IMR-90 (cell line): ENCODE measurements at regions of chr10 and their contacts with region 1.

Region 1: GRCh38 chr10:21943633-21944265 is 59.8 kb downstream of the DNAJC1 start:
- DNase-seq: no peak
- ATAC-seq: no peak
- H3K4me3 ChIP-seq: no peak overlapping the region
- H3K27ac ChIP-seq: no peak overlapping the region
- H3K4me1 ChIP-seq: no peaks in the 10 kb centered on the region; the same call in 1 of the 2 replicates
- H3K27me3 ChIP-seq: no peaks in the 10 kb centered on the region
- CTCF ChIP-seq: no peak
- POLR2A ChIP-seq: no peak
- RAD21 ChIP-seq: no peak

Region 2: GRCh38 chr10:21285742-21286331 is 657.9 kb before region 1 on chr10:
- CTCF ChIA-PET with region 1: no interaction called
- POLR2A ChIA-PET with region 1: no interaction called
- dilution Hi-C with region 1: no loop called
- in situ Hi-C with region 1: loop called (anchors 10 kb)
- intact Hi-C with region 1: no loop called
- DNase-seq: peak; percentile 21
- ATAC-seq: peak; percentile 17; the same call in 1 of the 2 replicates
- H3K4me3 ChIP-seq: no peak overlapping the region
- H3K27ac ChIP-seq: no peak overlapping the region
- H3K4me1 ChIP-seq: 0 out of 2 replicates have a peak, but pooled peaks cover 2% of the 10 kb centered on the region
- H3K27me3 ChIP-seq: no peaks in the 10 kb centered on the region
- CTCF ChIP-seq: no peak
- POLR2A ChIP-seq: no peak
- RAD21 ChIP-seq: no peak

Region 3: DNA sequence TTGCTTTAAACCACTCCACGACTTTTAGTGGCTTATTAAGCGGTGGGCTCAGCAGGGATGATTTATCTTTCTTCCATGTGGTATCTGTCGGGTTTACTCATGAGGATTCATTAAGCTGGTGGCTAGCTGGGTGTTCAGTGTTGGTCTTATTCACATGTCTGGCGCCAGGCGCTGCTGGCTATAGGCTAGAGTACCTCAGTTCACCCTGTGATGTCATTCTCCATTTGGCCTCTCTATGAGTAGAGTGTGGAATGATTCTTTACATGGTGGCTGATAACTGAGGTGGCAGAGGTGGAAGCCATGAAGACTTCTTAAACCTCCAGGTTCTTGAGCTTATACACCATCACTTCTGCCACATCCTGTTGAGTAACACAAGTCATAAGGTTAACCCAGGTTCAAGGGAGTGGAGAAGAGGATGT is 294.3 kb before region 1 on chr10:
- CTCF ChIA-PET with region 1: no interaction called
- POLR2A ChIA-PET with region 1: no interaction called
- dilution Hi-C with region 1: no loop called
- in situ Hi-C with region 1: no loop called
- intact Hi-C with region 1: loop called (anchors 5 kb)
- DNase-seq: no peak
- ATAC-seq: no peak
- H3K4me3 ChIP-seq: no peak overlapping the region
- H3K27ac ChIP-seq: no peak overlapping the region
- H3K4me1 ChIP-seq: no peaks in the 10 kb centered on the region
- H3K27me3 ChIP-seq: no peaks in the 10 kb centered on the region
- CTCF ChIP-seq: no peak
- POLR2A ChIP-seq: no peak
- RAD21 ChIP-seq: no peak

Region 4: GRCh38 chr10:21807180-21807579 is 136.6 kb before region 1 on chr10:
- CTCF ChIA-PET with region 1: no interaction called
- POLR2A ChIA-PET with region 1: no interaction called
- dilution Hi-C with region 1: no loop called
- in situ Hi-C with region 1: no loop called
- intact Hi-C with region 1: no loop called
- DNase-seq: no peak
- ATAC-seq: no peak
- H3K4me3 ChIP-seq: no peak overlapping the region
- H3K27ac ChIP-seq: no peak overlapping the region
- H3K4me1 ChIP-seq: peaks cover 1% of the 10 kb centered on the region; the same call in 1 of the 2 replicates
- H3K27me3 ChIP-seq: no peaks in the 10 kb centered on the region
- CTCF ChIP-seq: no peak
- POLR2A ChIP-seq: no peak
- RAD21 ChIP-seq: no peak

Region 5: GRCh38 chr10:22148961-22149360 is 205.2 kb after region 1 on chr10:
- CTCF ChIA-PET with region 1: no interaction called
- POLR2A ChIA-PET with region 1: no interaction called
- dilution Hi-C with region 1: no loop called
- in situ Hi-C with region 1: no loop called
- intact Hi-C with region 1: no loop called
- DNase-seq: peak; percentile 7
- ATAC-seq: no peak
- H3K4me3 ChIP-seq: no peak overlapping the region
- H3K27ac ChIP-seq: no peak overlapping the region
- H3K4me1 ChIP-seq: no peaks in the 10 kb centered on the region
- H3K27me3 ChIP-seq: no peaks in the 10 kb centered on the region
- CTCF ChIP-seq: no peak
- POLR2A ChIP-seq: no peak
- RAD21 ChIP-seq: no peak

Region 6: DNA sequence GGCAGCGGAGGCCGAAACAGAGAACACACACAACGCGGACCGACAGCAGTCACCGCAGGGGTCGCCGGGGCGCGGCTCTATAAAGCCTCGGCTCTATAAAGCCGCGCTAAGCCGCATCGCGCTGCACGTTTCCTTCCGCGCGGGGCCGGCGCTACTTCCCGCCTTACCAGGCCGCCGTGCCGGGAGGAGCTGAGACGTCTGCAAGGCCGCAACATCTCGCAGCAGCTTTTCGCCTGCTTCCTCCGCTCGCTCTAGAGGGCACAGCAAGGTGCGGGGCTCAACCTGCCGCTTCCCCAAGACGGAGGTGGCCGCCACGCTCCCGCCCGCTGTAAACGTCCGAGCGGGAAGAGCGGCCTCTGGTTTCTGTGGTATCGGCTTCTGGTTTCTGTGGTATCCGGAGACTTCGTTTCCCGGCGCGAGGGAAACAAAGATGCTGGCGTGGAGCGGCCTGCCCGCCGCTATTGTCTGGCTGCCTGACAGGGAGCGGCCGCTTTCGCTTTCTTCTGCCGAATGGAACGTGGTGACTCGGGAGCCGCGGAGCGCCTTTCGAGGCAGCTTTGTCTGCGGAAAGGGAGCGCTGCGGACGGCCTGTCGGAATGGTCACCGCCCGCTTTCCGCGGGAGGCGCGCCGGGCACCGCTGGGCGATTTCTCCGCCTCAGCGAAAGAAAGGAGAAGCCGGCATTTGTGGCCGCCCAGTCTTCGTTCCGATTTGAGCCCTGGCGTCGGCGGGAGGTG is 493.3 kb after region 1 on chr10:
- CTCF ChIA-PET with region 1: no interaction called
- POLR2A ChIA-PET with region 1: interaction called, 12 read pairs
- dilution Hi-C with region 1: no loop called
- in situ Hi-C with region 1: no loop called
- intact Hi-C with region 1: no loop called
- DNase-seq: peak; percentile 89
- ATAC-seq: peak; percentile 83
- H3K4me3 ChIP-seq: peak overlapping the region; percentile 56
- H3K27ac ChIP-seq: peak overlapping the region; percentile 90
- H3K4me1 ChIP-seq: peaks cover 8% of the 10 kb centered on the region; the same call in 1 of the 2 replicates
- H3K27me3 ChIP-seq: peaks cover 7% of the 10 kb centered on the region
- CTCF ChIP-seq: no peak
- POLR2A ChIP-seq: peak; percentile 82; the same call in 1 of the 2 replicates
- RAD21 ChIP-seq: no peak